Heart left ventricle (tissue), 16 donors: ENCODE measurements at regions of chr7 and their contacts with region 1.

Region 1: GRCh38 chr7:79308192-79308591 is 145.3 kb downstream of the MAGI2 start:
- DNase-seq: no peak
- ATAC-seq: peak in 3 of 4 donors; percentile 69 to 87 (median 82)
- H3K4me3 ChIP-seq: no peak overlapping the region
- H3K27ac ChIP-seq: no peak overlapping the region
- H3K4me1 ChIP-seq: no peaks in the 10 kb centered on the region
- H3K27me3 ChIP-seq: no peaks in the 10 kb centered on the region
- CTCF ChIP-seq: peak in 2 of 12 donors; percentile 26 to 36
- POLR2A ChIP-seq: no peak

Region 2: DNA sequence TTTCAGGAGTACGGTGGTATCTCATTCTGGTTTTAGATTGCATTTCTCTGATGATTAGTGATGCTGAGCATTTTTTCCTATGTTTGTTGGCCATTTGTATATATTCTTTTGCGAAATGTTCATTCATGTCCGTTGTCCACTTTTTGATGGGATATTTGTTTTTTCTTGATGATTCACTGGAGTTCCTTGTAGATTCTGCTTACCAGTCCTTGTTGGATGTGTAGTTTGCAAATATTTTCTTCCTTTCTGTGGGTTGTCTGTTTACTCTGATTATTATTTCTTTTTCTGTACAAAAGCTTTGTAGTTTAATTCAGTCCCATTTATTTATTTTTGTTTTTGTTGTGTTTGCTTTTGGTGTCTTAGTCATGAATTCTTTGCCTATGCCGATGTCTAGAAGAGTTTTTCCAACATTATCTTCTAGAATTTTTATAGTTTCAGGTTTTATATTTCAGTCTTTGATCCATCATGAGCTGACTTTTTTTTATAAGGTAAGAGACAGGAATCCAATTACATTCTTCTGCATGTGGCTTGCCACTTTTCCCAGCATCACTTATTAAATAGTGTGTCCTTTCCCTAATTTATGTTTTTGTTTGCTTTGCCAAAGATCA is 175.2 kb before region 1 on chr7:
- intact Hi-C with region 1: no loop called
- DNase-seq: no peak
- ATAC-seq: no peak
- H3K4me3 ChIP-seq: no peak overlapping the region
- H3K27ac ChIP-seq: no peak overlapping the region
- H3K4me1 ChIP-seq: no peaks in the 10 kb centered on the region
- H3K27me3 ChIP-seq: no peaks in the 10 kb centered on the region
- CTCF ChIP-seq: no peak
- POLR2A ChIP-seq: no peak

Region 3: DNA sequence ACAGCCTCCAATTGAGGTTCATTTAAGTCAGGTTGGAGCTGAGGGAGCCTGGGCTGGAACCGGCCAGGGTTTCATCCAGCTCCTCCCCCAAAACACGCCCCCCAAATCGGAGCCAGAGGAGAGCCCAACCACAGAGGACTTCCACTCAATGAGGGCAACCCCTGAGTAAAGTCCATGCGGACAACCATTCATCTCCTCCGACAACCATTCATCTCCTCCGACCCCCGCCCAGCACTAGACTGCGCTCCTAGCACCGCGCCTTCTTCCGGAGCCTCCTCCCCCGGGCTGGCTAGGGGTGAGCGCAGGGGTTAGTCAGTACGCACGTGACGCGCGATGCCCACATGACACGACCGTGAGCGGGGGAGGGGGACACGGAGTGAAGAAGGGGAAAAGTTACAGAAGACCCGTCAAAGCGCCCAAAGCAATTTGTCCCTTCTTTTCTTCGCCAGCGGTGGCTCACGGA is 143.9 kb after region 1 on chr7:
- intact Hi-C with region 1: loop called in 3 of 10 experiments (anchors 10 kb)
- DNase-seq: peak; percentile 84 to 92 (median 87)
- ATAC-seq: peak; percentile 84 to 90 (median 87)
- H3K4me3 ChIP-seq: peak overlapping the region; percentile 64 to 93 (median 74)
- H3K27ac ChIP-seq: peak overlapping the region; percentile 47 to 98 (median 91)
- H3K4me1 ChIP-seq: peaks cover 0 to 32% (median 20%) of the 10 kb centered on the region in 12 donors
- H3K27me3 ChIP-seq: peaks cover 0 to 14% (median 0%) of the 10 kb centered on the region in 9 donors
- CTCF ChIP-seq: no peak
- POLR2A ChIP-seq: peak in 1 of 2 donors; percentile 38

Region 4: GRCh38 chr7:79741684-79742083 is 433.5 kb after region 1 on chr7:
- intact Hi-C with region 1: loop called in 1 of 10 experiments (anchors 10 kb)
- DNase-seq: no peak
- ATAC-seq: no peak
- H3K4me3 ChIP-seq: no peak overlapping the region
- H3K27ac ChIP-seq: no peak overlapping the region
- H3K4me1 ChIP-seq: no peaks in the 10 kb centered on the region
- H3K27me3 ChIP-seq: no peaks in the 10 kb centered on the region
- CTCF ChIP-seq: peak in 7 of 12 donors; percentile 11 to 40 (median 26)
- POLR2A ChIP-seq: no peak

Region 5: GRCh38 chr7:80018941-80019752 is 711.0 kb after region 1 on chr7:
- intact Hi-C with region 1: loop called in 1 of 10 experiments (anchors 10 kb)
- DNase-seq: peak in 4 of 5 donors; percentile 9 to 25 (median 22)
- ATAC-seq: peak in 3 of 4 donors; percentile 45 to 59 (median 57)
- H3K4me3 ChIP-seq: no peak overlapping the region
- H3K27ac ChIP-seq: no peak overlapping the region
- H3K4me1 ChIP-seq: no peaks in the 10 kb centered on the region
- H3K27me3 ChIP-seq: no peaks in the 10 kb centered on the region
- CTCF ChIP-seq: peak; percentile 67 to 86 (median 79)
- POLR2A ChIP-seq: no peak